GM10248 (cell line): ENCODE measurements at regions of chr1 and their contacts with region 1.

Region 1: DNA sequence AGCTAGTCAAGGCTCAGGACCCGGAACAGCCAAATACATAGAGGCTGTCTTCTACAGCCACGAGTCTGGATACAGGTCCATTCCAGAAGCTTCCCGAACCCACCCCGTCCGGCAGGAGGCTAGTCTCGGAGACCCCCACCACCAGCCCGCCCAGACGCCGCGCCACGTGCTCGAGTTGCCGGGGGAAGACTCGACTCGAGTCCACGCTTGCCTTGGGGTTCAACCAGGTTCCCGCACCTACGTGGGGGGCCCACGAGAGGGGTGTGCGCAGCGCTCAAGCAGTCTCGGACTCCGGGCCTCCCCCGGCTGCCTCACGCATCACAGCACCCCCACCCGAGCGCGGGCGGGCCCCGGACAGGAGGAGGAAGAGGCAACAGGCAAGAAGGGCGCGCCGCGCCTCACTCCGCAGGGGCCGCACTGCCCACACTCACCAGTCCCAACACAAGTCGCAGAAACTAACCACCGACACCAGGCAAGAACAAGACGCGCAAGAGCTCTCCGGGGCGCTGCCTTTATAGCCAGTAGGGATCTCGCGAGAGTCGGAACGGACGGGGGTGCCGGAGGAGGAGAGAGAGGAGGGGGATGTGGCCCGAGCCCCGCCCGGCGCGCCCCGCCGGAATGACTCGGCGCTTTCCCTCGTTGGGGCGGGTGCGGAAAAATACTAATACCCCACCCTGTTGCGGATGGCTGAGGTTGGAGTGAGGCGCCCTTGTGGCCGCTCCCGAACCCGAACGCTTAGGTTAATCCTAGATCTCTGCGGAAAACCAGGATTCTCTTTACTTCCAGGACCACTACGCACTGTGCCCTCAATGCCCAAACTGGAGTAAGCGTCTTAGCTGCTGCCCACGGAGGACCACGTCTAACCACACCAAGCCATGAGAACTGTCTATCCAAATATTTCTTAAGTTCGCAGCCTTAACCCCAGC is at the start of gene PRDX1:
- DNase-seq: peak; percentile 95
- CTCF ChIP-seq: no peak

Region 2: DNA sequence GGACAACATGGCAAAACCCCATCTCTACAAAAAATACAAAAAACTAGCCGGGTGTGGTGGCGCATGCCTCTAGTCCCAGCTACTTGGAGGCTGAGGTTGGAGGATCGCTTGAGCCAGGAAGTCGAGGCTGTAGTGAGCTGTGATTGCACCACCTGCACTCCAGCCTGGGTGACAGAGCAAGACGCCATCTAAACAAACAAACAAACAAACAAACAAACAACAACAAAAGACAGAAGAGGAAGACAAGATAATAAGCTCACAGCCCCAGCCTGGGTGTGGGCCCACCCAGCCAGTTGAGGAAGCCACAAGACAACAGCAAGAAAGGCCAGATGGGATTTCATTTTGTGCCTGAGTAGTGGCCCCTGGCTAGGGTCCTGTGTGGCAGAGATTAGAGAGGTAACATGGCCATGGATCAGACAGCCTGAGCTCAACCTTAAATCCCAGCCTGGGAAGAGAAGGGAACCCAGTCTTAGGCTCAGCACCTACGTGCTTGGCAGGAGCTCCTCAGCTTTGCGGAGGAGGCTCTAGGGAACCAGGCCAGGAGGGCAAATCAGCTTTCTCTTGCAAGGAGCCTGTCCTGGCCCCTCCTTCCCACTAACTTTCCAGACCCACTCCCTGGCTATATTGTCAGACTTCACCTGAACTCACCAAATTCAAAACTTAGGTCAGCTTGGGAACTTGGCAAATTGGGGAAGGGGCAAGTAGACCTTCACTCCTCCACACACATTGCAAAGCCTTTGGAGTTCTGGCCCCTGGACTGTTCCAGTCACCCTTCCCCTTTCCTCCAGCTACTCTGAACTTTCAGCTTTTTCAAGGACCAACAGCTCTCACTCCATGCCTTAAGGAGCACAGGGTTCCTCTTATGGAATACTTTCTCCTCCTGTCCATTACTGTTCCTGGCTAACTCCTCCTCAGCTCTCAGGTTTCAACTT is 728.6 kb before region 1 on chr1:
- CTCF ChIA-PET with region 1: no interaction called
- POLR2A ChIA-PET with region 1: interaction called, 11 read pairs
- DNase-seq: no peak
- CTCF ChIP-seq: no peak

Region 3: DNA sequence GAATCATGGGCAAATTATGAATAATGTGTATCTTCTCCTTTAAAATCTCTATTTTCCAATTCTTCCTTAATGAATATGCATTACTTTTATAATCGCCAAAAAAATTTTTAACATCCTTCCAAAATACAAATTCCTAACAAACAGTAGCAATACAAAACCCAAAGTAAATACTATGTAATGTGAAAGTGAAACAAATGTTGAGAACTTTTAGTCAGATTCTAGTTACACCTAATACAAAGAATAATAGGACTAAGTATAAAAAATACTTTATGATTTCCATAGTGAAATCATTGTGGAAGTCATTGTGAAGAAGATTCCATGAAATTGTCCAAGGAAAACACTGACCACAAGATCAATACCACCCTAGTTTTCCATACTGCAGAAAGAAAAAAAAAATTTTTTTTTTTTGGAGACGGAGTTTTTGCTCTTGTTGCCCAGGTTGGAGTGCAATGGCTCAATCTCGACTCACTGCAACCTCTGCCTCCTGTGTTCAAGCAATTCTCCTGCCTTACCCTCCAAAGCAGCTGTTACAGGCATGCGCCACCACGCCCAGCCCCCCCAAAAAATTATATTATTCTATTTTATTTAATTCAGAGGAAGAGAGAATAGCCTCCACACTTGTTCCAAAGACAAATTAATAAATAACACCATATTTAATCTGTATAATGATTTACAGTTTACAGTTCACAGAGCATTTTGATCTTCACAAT is 42.5 kb before region 1 on chr1:
- CTCF ChIA-PET with region 1: no interaction called
- POLR2A ChIA-PET with region 1: no interaction called
- DNase-seq: no peak
- CTCF ChIP-seq: no peak

Region 4: DNA sequence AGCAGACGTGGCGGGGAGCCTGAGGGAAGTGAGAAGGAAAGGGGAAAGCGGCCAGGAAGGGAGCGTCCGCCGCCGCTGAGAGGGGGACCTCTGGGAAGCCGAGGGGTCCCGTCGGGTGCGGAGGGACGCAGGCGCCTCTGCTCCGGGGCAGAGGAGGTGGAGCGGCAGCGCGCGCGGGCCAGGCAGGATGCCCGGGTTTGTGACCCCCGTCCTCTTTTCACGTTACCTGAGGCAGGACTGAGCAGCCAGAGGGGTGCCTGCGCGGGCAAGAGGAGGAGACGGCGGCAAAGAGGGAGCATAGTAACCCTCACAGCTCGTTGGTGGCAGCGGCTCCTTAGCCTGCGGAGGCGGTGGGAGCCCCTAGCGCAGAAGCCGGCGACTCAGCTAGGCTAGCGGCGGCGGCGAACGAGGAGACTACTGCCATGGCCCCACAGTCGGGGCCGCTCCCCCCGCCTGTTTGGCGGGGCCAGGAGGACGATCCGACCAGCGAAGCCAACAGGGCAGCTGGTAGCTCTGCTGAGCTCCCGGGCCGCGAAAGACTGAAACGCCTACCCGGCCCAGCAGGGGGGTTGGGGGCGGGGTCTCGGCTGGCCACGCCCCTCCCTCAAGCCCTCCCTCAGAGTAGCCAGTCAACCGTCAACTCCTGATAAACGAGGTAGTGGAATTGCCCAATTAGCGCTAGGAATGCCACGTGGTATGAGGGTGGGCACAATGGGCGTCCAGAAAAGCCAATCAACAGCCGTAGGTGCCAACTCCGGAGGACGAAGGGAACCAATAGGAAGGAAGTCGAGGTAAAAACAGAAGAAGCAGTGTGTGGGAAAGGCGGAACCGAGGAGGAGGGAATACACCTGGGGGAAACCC is 30.8 kb before region 1 on chr1 and contains the start of gene TESK2:
- CTCF ChIA-PET with region 1: interaction called, 8 read pairs
- POLR2A ChIA-PET with region 1: interaction called, 26 read pairs
- DNase-seq: peak; percentile 95
- CTCF ChIP-seq: no peak

Region 5: GRCh38 chr1:45535988-45536766 is 14.5 kb after region 1 on chr1:
- CTCF ChIA-PET with region 1: interaction called, 9 read pairs
- POLR2A ChIA-PET with region 1: interaction called, 87 read pairs
- DNase-seq: no peak
- CTCF ChIP-seq: no peak

Region 6: DNA sequence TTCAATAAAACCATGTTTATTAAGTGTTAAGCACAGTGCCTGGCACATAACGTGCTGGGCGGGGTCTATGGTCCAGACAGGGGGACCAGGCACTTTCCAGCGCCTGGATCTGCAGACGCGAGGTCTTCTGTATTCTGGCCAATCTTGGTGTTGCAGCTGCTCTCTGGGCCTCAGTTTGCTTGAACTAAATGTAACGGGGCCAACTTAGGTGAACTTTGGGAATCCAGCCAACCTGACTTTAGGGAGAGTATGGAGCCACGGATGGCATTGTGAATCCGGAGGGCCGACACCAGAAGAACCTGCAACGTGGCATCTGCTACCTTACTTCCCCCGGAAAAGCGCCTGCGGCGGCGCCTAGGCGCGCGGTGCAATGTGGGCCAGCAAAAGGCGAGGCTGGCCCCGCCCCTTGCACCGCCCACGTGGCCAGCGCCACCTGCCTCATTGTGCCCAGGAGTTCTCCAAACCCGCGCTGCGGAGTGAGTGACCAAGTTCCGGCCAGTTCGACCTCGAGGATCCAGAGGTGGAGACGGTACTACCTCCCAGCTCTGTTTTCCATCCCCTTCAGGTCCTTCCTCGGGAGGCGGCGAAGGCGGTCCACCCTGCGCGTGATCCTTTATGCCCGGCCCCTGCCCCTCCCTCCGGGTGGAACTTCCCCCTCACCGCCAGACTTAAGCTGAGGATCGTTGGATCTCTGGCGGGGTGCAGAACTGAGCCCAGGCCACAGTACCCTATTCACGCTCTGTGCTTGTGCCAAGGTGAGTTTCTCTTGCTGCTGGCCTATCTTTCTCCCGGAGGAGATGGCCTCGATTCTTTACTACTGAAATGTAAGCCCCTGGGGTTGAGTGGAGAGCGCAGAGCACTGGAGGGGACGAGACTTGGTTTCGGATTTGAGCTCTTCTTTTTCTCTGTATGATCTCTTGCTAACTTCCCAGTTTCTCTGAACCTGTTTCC is 29.0 kb after region 1 on chr1 and contains the start of gene AKR1A1:
- CTCF ChIA-PET with region 1: interaction called, 6 read pairs
- POLR2A ChIA-PET with region 1: interaction called, 87 read pairs
- DNase-seq: peak; percentile 91
- CTCF ChIP-seq: no peak